ENCODE measurements at regions of chr2 and their contacts with region 1.

Region 1: DNA sequence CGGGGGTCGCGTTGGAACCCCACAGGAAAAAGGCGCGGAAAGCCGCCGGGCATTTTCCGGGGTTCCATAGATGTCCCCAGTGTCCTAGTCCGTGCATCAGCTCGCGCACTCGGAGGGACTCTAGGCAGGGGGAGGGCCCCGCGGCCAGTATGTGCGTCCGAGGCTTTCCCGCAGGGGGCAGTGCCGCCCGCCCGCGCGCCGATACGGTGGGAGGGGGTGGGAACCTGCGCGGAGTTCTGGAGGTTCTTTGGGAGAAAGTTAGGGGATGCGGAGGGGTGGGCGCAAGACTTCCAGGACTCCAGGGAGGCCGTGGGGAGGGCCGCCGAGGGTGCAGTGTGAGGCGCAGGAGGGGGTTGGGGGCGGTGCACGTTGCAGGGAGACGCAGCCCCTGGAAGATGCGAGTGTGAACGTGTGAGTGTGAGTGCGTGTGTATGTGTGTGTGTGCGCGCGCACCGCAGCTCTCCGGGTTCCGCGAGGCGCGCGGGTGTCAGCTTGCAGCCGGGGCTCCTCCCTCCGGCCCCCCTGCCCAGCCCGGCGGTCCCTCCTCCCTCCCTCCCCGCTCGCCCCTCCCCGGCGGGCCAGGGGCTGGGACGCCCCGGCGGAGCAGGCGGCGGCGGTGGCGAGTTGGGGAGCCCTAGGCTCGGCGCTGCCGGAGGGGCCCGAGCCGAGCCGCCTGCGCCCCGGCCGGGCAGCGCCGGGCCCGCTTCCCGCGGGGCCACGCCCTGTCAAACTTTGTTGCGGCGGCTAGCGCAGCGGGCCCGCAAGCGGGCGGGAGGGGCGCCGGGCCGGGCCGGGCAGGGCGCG is at the start of gene TCF7L1:
- DNase-seq: peak; percentile 69
- H3K4me3 ChIP-seq: peak within 1 kb of the TSS; percentile 53 to 74 (median 58)
- H3K27ac ChIP-seq: peak within 1 kb of the TSS; percentile 75 to 87 (median 77)
- H3K4me1 ChIP-seq: peaks cover 0 to 28% (median 15%) of the 10 kb centered on the region in 4 donors
- H3K27me3 ChIP-seq: peaks cover 50% of the 10 kb centered on the region
- CTCF ChIP-seq: peak; percentile 61 to 80 (median 69)
- EP300 ChIP-seq: no peak
- POLR2A ChIP-seq: no peak
- total RNA-seq, gene TCF7L1: 0.75 to 2.9 (median 1.1) TPM

Region 2: DNA sequence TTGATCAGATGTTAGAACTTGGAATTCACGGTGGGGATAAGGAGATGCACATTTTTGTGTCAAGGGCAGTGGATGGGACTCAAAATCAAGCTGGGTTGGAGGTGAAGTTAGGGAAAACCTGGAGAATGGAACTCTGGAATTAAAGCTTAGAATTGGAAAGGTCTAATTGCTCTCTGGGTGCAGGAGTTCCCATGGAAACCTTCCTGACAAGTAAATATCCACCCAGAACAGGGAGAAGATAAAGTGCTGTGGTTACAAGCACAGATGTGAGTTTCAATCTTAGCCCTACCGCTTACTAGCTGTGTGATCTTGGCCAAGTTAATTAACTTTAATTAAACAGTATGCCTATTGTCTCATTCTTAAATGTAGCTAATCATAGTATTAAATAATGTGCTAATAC is 71.1 kb before region 1 on chr2:
- in situ Hi-C with region 1: no loop called
- intact Hi-C with region 1: loop called (anchors 2 kb)
- DNase-seq: no peak
- H3K4me3 ChIP-seq: no peak overlapping the region
- H3K27ac ChIP-seq: no peak overlapping the region
- H3K4me1 ChIP-seq: peaks cover 0 to under 1% (median 0%) of the 10 kb centered on the region in 4 donors
- H3K27me3 ChIP-seq: peaks cover 3% of the 10 kb centered on the region
- CTCF ChIP-seq: no peak
- EP300 ChIP-seq: no peak
- POLR2A ChIP-seq: no peak

Region 3: DNA sequence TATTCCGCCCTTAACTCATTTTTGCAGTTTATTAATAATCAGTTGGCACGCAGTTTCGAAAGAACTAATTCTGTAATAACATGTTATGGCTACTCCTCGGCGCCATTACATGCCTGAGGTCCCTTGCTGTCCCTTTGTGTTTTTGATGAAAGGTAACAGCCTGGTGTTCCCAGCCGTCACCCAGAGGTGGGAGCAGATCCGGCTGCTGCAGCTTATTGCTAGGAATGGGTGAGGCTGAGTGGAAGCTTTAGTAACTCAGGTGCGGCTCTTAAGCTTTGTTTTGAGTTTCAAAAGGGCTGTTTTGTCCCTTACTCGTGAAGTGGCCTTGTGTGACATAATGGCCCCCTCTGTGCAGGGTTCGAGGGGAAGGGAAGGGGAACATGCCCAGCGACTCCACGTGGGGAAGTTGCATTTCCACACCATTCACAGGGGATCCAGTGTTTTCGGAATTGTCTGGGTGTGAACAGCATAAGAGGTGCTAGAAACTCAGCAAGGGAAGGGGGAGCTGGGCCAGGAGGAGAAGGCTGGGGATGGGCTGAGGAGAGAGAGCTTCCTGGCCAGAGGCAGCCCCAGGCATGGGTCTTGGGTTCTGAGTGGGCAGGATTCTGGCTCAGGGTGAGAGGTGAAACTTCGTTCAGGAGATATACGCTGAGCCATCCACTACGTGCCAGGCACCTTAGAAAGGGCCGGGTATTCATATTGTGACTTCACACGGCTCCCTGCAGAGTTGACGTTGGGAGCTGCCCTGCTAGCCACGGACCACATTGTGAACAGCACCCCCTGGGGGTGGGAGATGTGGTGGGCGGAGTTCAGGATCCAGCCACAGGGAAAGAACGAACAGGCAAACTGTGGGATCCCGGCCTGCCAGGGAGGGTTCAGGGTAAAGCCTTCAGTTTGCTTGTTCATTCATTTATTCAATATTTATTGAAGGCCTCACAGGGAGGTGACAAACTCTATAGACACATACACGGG is 110.4 kb after region 1 on chr2:
- in situ Hi-C with region 1: no loop called
- intact Hi-C with region 1: loop called (anchors 10 kb)
- DNase-seq: peak; percentile 39
- H3K4me3 ChIP-seq: no peak overlapping the region
- H3K27ac ChIP-seq: no peak overlapping the region
- H3K4me1 ChIP-seq: peaks cover 5 to 9% (median 6%) of the 10 kb centered on the region in 4 donors
- H3K27me3 ChIP-seq: no peaks in the 10 kb centered on the region
- CTCF ChIP-seq: peak; percentile 33 to 49 (median 43)
- EP300 ChIP-seq: no peak
- POLR2A ChIP-seq: no peak

Region 4: GRCh38 chr2:85277416-85278158 is 144.6 kb after region 1 on chr2:
- in situ Hi-C with region 1: loop called in 3 of 4 experiments (anchors 10 to 25 kb)
- intact Hi-C with region 1: no loop called
- DNase-seq: no peak
- H3K4me3 ChIP-seq: no peak overlapping the region
- H3K27ac ChIP-seq: peak overlapping the region; percentile 30 to 70 (median 57)
- H3K4me1 ChIP-seq: peaks cover 0 to 31% (median 11%) of the 10 kb centered on the region in 4 donors
- H3K27me3 ChIP-seq: no peaks in the 10 kb centered on the region
- CTCF ChIP-seq: no peak
- EP300 ChIP-seq: no peak
- POLR2A ChIP-seq: no peak

Region 5: GRCh38 chr2:85288244-85288725 is 155.2 kb after region 1 on chr2:
- in situ Hi-C with region 1: loop called in 3 of 4 experiments (anchors 10 to 25 kb)
- intact Hi-C with region 1: loop called (anchors 2 kb)
- DNase-seq: peak; percentile 69
- H3K4me3 ChIP-seq: no peak overlapping the region
- H3K27ac ChIP-seq: peak overlapping the region in 2 of 4 donors; percentile 15 to 37
- H3K4me1 ChIP-seq: peaks cover 0 to 23% (median 4%) of the 10 kb centered on the region in 4 donors
- H3K27me3 ChIP-seq: no peaks in the 10 kb centered on the region
- CTCF ChIP-seq: no peak
- EP300 ChIP-seq: no peak
- POLR2A ChIP-seq: no peak

Measured in transverse colon (tissue), 4 donors.